ENCODE measurements at regions of chr3 and their contacts with region 1.

Region 1: DNA sequence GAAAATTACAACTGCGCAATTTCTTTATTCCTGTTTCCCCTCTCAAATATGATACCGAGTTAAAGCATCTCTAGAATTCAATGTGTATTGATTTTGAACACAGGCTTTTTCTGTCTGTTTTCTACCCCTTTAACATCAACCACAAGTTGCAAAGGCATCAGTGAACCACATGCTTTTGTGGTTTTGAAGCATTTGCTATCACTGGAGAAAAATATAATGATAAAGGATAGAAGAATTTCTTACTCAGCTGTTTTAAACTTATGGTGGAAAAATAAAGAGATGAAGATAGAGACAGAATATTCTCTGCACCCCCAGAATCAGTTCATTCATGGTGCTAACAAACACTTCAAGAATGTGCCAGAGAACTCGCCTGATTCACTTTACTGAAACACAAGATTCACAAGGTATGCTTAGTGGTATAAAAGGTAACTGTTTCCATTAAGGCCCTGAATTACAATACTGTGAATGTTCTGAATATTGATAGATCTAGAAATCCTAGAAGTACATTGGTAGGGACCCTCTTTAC is 9.5 kb upstream of the DPPA4 start:
- DNase-seq: no peak
- H3K4me3 ChIP-seq: no peak overlapping the region
- H3K27ac ChIP-seq: no peak overlapping the region
- H3K4me1 ChIP-seq: no peaks in the 10 kb centered on the region
- H3K27me3 ChIP-seq: no peaks in the 10 kb centered on the region
- CTCF ChIP-seq: no peak
- EP300 ChIP-seq: no peak
- POLR2A ChIP-seq: no peak

Region 2: DNA sequence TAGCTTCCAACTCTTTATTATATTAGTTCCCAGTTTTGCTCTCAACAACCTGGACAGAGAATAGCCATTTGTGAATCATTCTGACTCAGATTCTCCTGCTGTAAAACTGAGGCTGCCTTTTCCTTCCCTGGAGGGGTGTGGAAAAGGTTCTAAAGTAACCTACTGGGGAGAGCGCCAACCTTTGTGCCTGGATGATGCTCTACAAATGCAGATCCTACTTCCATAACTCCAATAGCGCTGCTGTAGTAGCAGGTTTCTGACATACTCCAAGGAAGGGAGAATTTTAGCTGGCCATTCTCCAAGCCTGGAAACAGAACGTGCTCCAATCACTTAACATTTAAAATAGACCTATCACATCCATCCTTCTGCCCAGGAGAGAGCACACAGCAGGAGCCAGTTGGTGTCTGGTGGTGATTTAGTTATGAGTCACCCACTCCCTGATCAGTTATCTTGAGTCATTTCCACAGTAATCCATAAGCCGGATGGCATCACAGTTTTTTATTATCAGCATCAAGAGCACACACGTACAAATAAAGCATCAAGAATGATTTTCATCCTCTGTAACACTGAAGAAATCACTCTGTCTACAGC is 874.7 kb before region 1 on chr3:
- intact Hi-C with region 1: no loop called
- DNase-seq: no peak
- H3K4me3 ChIP-seq: no peak overlapping the region
- H3K27ac ChIP-seq: no peak overlapping the region
- H3K4me1 ChIP-seq: no peaks in the 10 kb centered on the region
- H3K27me3 ChIP-seq: no peaks in the 10 kb centered on the region
- CTCF ChIP-seq: no peak
- EP300 ChIP-seq: no peak
- POLR2A ChIP-seq: no peak

Region 3: DNA sequence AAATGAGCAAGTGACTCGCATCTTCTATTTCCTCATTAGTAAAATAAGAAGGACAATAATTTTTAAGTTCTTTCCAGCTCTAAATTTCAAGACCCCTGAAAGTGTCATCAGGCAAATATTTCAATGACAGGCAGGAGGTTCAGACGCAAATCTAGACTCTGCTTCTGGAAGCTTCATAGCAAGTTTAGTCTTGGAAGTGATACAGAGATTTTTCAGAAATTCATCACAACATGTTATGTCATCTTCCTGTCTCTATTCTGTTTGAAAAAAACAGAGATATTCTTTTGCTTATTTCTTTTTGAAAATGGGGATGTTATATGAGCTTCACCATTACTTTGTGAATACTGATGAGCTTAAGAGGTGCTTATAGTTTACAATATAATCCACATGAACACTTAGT is 136.3 kb before region 1 on chr3:
- intact Hi-C with region 1: no loop called
- DNase-seq: no peak
- H3K4me3 ChIP-seq: no peak overlapping the region
- H3K27ac ChIP-seq: no peak overlapping the region
- H3K4me1 ChIP-seq: no peaks in the 10 kb centered on the region
- H3K27me3 ChIP-seq: peaks cover 3% of the 10 kb centered on the region
- CTCF ChIP-seq: no peak
- EP300 ChIP-seq: no peak
- POLR2A ChIP-seq: no peak

Region 4: DNA sequence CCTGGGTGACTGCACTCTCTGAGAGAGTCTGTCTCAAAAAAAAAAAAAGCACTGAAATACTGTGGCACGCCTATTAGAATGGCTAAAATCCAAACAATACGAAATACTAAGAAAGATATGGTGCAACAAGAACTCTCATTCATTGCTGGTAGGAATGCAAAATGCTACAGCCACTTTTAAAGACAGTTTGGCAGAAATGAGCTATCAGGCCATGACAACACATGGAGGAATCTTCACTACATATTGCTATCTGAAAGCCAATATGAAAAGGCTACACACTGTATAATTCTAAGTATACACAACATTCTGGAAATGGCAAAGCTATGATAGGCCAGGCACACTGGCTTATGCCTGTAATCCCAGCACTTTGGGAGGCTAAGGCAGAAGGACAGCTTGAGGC is 49.3 kb before region 1 on chr3:
- intact Hi-C with region 1: loop called in 1 of 4 experiments (anchors 2 kb)
- DNase-seq: no peak
- H3K4me3 ChIP-seq: no peak overlapping the region
- H3K27ac ChIP-seq: no peak overlapping the region
- H3K4me1 ChIP-seq: no peaks in the 10 kb centered on the region
- H3K27me3 ChIP-seq: no peaks in the 10 kb centered on the region
- CTCF ChIP-seq: no peak
- EP300 ChIP-seq: no peak
- POLR2A ChIP-seq: no peak

Measured in ovary (tissue), 10 donors.